ENCODE measurements at regions of chr20 and their contacts with region 1.

Region 1: DNA sequence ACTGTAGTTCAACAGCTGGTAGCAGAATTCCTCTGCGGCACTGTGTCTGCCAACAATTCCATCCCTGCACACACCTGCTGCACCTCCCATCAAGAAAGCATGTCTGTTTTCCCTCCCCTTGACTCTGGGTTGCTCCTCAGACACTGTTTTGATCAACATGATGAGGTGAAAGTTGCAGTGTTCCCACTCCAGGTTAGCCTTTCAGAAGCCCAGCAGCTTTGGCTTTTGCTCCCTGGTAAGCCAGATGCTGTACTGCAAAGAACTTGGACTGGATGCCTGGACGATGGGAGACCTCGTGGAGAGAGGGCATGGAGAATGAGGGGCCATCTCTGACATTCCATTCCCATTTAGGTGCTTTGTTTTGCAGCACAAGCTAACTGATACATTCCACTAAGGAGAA is 79.1 kb upstream of the MAFB start:
- DNase-seq: no peak
- H3K4me3 ChIP-seq: no peak overlapping the region
- H3K27ac ChIP-seq: no peak overlapping the region
- H3K4me1 ChIP-seq: no peaks in the 10 kb centered on the region
- H3K27me3 ChIP-seq: peaks cover 84% of the 10 kb centered on the region
- CTCF ChIP-seq: no peak

Region 2: GRCh38 chr20:40687384-40688128 is 80.5 kb before region 1 on chr20:
- CTCF ChIA-PET with region 1: no interaction called
- POLR2A ChIA-PET with region 1: interaction called, 13 read pairs
- intact Hi-C with region 1: no loop called
- DNase-seq: no peak
- H3K4me3 ChIP-seq: no peak overlapping the region
- H3K27ac ChIP-seq: no peak overlapping the region
- H3K4me1 ChIP-seq: no peaks in the 10 kb centered on the region
- H3K27me3 ChIP-seq: peaks cover 61% of the 10 kb centered on the region
- CTCF ChIP-seq: no peak

Measured in PC-9 (cell line).